ENCODE measurements at regions of chr11 and their contacts with region 1.

Region 1: DNA sequence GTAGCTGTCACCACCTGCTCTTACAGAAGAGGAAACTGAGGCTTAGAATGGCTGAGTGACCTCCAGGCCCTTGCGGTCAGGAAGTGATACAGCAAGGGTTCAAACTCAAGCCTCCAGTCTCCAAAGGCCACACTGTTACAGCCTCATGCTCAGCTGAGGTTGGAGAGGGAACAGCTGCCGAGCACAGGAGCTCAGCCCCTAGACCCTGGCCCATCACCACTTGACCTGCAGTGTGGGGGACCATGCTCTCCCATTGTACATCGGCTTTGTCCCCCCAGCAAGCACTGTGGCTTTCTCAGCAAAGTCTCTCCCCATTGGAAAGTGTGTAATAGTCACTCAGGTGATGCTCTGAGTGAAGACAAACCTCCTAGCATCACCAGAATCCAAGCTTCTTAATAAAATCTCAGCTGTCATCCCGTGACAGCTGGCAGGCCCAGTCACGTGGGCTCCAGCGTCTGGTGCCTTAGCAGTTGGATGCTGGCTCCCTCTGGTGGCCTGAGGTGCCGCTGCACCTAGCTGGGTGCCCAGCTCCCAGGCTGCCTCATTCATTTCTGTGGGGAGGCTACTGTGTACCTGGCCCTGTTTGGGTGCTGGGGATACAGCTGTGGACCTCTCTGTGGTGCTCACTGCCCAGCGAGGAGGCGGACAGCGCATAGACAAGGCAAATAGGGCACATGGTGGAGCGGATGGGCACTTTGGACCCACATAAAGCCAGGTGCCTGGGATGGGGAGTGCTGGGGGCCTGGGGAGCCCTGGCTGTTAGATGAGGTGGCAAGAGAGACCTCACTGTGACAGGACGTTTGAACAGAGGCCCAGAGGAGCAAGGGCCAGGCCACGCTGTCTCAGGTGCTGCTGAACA is 19.1 kb upstream of the MYRF start:
- DNase-seq: peak; percentile 76 to 93 (median 80)
- ATAC-seq: peak; percentile 99
- H3K4me3 ChIP-seq: no peak overlapping the region
- H3K4me3 Mint-ChIP-seq: no peak overlapping the region
- H3K27ac ChIP-seq: no peak overlapping the region
- H3K27ac Mint-ChIP-seq: no peak overlapping the region
- H3K4me1 ChIP-seq: peaks cover 7% of the 10 kb centered on the region
- H3K4me1 Mint-ChIP-seq: peaks cover 4% of the 10 kb centered on the region
- H3K27me3 ChIP-seq: no peaks in the 10 kb centered on the region
- H3K27me3 Mint-ChIP-seq: no peaks in the 10 kb centered on the region
- CTCF ChIP-seq: peak; percentile 93

Region 2: GRCh38 chr11:61477727-61478148 is 255.6 kb before region 1 on chr11:
- CTCF ChIA-PET with region 1: interaction called, 3 read pairs
- POLR2A ChIA-PET with region 1: no interaction called
- intact Hi-C with region 1: loop called (anchors 2 kb)
- DNase-seq: peak; percentile 29 to 71 (median 43)
- ATAC-seq: peak; percentile 39
- H3K4me3 ChIP-seq: no peak overlapping the region
- H3K4me3 Mint-ChIP-seq: no peak overlapping the region
- H3K27ac ChIP-seq: no peak overlapping the region
- H3K27ac Mint-ChIP-seq: no peak overlapping the region
- H3K4me1 ChIP-seq: peaks cover 9% of the 10 kb centered on the region
- H3K4me1 Mint-ChIP-seq: peaks cover 7% of the 10 kb centered on the region
- H3K27me3 ChIP-seq: peaks cover 0 to under 1% of the 10 kb centered on the region in 2 experiments
- H3K27me3 Mint-ChIP-seq: no peaks in the 10 kb centered on the region
- CTCF ChIP-seq: peak; percentile 96

Region 3: GRCh38 chr11:61679893-61680621 is 53.3 kb before region 1 on chr11 and contains the start of gene DAGLA:
- CTCF ChIA-PET with region 1: interaction called, 28 read pairs
- POLR2A ChIA-PET with region 1: interaction called, 10 read pairs
- intact Hi-C with region 1: loop called (anchors 1 kb)
- DNase-seq: peak; percentile 50 to 88 (median 75)
- ATAC-seq: peak; percentile 72
- H3K4me3 ChIP-seq: peak within 1 kb of the TSS; percentile 19
- H3K4me3 Mint-ChIP-seq: peak within 1 kb of the TSS; percentile 77
- H3K27ac ChIP-seq: no peak within 1 kb of the TSS
- H3K27ac Mint-ChIP-seq: no peak within 1 kb of the TSS
- H3K4me1 ChIP-seq: peaks cover 27% of the 10 kb centered on the region
- H3K4me1 Mint-ChIP-seq: no peaks in the 10 kb centered on the region
- H3K27me3 ChIP-seq: peaks cover 3% of the 10 kb centered on the region in 2 experiments
- H3K27me3 Mint-ChIP-seq: peaks cover 24% of the 10 kb centered on the region
- CTCF ChIP-seq: peak; percentile 78
- total RNA-seq, gene DAGLA: 0.52 to 0.73 TPM

Region 4: DNA sequence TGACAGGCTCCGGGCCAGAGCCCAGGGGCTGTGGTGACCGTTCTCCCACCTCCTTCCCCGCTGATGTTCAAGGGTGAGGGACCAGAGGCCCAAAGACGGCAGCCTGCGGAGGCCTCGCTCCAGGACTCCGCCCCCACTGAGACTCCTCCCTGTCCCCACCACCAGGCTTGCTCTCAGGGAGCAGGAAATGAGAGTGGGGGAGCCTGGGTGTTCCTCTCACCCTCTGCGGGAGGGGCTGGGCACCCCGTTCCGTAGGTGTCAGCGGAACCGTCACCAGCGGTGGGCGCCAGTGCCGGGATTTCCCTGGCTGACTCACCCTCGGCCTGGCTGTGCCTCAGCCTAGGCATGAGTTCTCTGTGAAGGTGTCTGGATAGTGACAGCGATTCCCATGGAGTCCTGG is 37.4 kb before region 1 on chr11:
- CTCF ChIA-PET with region 1: interaction called, 6 read pairs
- POLR2A ChIA-PET with region 1: interaction called, 5 read pairs
- intact Hi-C with region 1: loop called (anchors 1 to 2 kb)
- DNase-seq: peak; percentile 78 to 98 (median 89)
- ATAC-seq: peak; percentile 99
- H3K4me3 ChIP-seq: peak overlapping the region; percentile 32
- H3K4me3 Mint-ChIP-seq: peak overlapping the region; percentile 53
- H3K27ac ChIP-seq: peak overlapping the region in 1 of 2 donors; percentile 27
- H3K27ac Mint-ChIP-seq: peak overlapping the region; percentile 85
- H3K4me1 ChIP-seq: peaks cover 45% of the 10 kb centered on the region
- H3K4me1 Mint-ChIP-seq: peaks cover 22% of the 10 kb centered on the region
- H3K27me3 ChIP-seq: no peaks in the 10 kb centered on the region
- H3K27me3 Mint-ChIP-seq: no peaks in the 10 kb centered on the region
- CTCF ChIP-seq: peak; percentile 33